ENCODE measurements at regions of chr2 and their contacts with region 1.

Region 1: DNA sequence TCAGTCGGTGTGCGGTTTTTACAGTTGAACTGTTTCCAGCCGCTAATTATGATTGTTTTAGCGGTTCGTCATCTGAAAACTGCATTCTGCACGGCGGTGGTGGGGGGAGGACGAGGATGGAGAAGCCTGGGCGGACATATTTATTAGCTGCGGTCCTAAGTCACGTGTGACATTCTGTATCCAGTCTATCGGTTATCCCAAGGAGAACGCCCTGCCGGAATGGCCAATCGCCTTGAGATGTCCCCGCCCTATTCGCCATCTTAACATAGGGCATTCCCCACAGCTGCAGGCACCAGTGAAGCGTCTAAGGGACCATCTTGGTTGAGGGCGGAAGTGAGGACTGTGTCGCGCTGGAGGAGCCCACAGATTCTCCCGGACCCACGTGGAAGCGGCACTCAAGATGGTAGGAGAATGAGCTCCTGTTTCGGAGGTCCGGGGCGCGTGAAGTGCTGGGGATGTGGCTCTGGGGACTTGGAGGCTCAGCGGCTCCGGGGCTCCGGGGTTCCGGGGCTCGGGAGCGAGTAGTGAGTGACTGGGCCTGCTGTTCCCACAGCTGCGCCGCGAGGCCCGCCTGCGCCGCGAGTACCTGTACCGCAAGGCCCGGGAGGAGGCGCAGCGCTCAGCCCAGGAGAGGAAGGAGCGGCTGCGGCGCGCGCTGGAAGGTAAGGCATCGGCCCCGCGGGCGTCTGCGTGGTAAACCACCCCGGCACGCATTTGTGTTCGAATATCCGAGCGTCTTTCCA is at the start of gene IMP4:
- ATAC-seq: peak; percentile 83 to 93 (median 91)
- H3K4me3 ChIP-seq: peak within 1 kb of the TSS; percentile 78 to 91 (median 83)
- H3K27ac ChIP-seq: peak within 1 kb of the TSS; percentile 88 to 94
- H3K4me1 ChIP-seq: peaks cover 4 to 14% of the 10 kb centered on the region in 2 donors
- total RNA-seq, gene IMP4: 62.2 to 107 (median 94.8) TPM

Region 2: DNA sequence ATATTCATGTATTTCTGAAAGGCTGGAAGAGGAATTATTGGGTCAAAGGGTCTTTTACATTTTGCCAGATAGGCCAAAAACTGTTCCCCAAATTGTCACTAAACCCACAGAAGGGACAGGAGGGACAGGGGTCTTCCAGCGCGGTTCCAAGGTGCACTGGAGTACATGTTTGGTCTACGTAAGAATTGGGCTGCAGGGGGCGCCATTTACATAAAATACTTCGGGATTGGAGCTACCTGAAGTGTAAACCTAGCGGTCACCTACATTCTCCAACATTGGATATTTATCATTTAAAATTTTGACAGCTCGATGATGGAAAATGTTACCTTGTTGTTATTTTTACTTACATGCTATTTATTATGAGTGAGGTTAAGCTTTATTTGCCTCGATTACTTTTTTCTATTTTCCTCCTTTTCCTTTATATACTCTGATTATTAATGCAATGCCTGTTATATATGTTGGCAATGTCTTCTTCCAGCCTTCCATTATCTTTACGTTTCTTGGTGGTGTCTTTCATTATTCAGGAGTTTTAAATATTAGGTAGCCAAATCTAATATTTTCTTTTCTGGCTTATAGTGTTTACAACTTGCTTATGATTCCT is 406.3 kb before region 1 on chr2:
- in situ Hi-C with region 1: loop called in 3 of 9 experiments (anchors 25 kb)
- ATAC-seq: peak in 5 of 8 experiments; percentile 41 to 71 (median 53)
- H3K4me3 ChIP-seq: no peak overlapping the region
- H3K27ac ChIP-seq: no peak overlapping the region
- H3K4me1 ChIP-seq: no peaks in the 10 kb centered on the region

Region 3: GRCh38 chr2:130150181-130151144 is 192.2 kb before region 1 on chr2:
- in situ Hi-C with region 1: loop called in 2 of 9 experiments (anchors 25 kb)
- ATAC-seq: no peak
- H3K4me3 ChIP-seq: no peak overlapping the region
- H3K27ac ChIP-seq: no peak overlapping the region
- H3K4me1 ChIP-seq: peaks cover 0 to 6% of the 10 kb centered on the region in 2 donors

Region 4: DNA sequence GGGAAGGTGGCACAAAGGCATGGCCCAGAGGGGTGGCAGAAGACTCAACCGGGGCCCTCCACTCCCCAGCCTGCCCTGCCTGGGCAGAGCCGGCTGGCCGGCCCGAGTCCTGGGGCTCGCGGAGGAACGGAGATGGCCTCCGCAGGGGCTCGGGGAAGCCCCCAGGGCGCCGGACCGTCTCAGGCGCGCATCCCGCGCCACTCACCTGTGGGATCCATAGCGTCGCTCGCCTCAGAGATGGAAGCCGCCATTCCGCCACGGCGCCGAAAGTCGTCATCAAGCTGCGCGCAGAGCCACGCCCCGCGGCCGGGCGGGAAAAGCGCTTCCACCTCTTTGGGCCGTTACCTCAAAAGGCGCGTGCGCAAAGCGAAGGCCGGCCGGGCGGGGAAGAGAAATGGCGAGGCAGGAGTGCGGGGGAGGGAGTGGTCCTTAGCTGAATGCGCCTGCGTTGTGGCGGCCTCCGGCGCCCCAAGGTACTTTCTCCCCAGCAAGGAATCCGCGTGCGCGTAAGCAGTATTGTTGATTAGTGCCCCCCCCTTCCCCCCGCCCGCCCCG is 161.3 kb before region 1 on chr2 and contains the start of gene SMPD4:
- in situ Hi-C with region 1: loop called in 4 of 9 experiments (anchors 10 to 25 kb)
- ATAC-seq: peak; percentile 70 to 81 (median 72)
- H3K4me3 ChIP-seq: peak within 1 kb of the TSS; percentile 64 to 98 (median 83)
- H3K27ac ChIP-seq: peak within 1 kb of the TSS; percentile 86 to 93
- H3K4me1 ChIP-seq: peaks cover 18 to 20% of the 10 kb centered on the region in 2 donors
- total RNA-seq, gene SMPD4: 20.1 to 57.6 (median 29.3) TPM

Measured in motor neuron (in vitro differentiated cells).